Heart left ventricle (tissue), 16 donors: ENCODE measurements at regions of chrX and their contacts with region 1.

Region 1: GRCh38 chrX:72408885-72409284 is 103.2 kb upstream of the CITED1 start:
- DNase-seq: no peak
- ATAC-seq: no peak
- H3K4me3 ChIP-seq: no peak overlapping the region
- H3K27ac ChIP-seq: no peak overlapping the region
- H3K4me1 ChIP-seq: no peaks in the 10 kb centered on the region
- H3K27me3 ChIP-seq: peaks cover 0 to 12% (median 0%) of the 10 kb centered on the region in 9 donors
- CTCF ChIP-seq: no peak
- POLR2A ChIP-seq: no peak

Region 2: GRCh38 chrX:72245461-72246089 is 163.3 kb before region 1 on chrX:
- intact Hi-C with region 1: no loop called
- DNase-seq: peak in 4 of 5 donors; percentile 8 to 62 (median 36)
- ATAC-seq: peak in 3 of 4 donors; percentile 59 to 68 (median 65)
- H3K4me3 ChIP-seq: no peak overlapping the region
- H3K27ac ChIP-seq: no peak overlapping the region
- H3K4me1 ChIP-seq: peaks cover 0 to 6% (median 0%) of the 10 kb centered on the region in 12 donors
- H3K27me3 ChIP-seq: no peaks in the 10 kb centered on the region
- CTCF ChIP-seq: peak; percentile 41 to 74 (median 54)
- POLR2A ChIP-seq: no peak

Region 3: DNA sequence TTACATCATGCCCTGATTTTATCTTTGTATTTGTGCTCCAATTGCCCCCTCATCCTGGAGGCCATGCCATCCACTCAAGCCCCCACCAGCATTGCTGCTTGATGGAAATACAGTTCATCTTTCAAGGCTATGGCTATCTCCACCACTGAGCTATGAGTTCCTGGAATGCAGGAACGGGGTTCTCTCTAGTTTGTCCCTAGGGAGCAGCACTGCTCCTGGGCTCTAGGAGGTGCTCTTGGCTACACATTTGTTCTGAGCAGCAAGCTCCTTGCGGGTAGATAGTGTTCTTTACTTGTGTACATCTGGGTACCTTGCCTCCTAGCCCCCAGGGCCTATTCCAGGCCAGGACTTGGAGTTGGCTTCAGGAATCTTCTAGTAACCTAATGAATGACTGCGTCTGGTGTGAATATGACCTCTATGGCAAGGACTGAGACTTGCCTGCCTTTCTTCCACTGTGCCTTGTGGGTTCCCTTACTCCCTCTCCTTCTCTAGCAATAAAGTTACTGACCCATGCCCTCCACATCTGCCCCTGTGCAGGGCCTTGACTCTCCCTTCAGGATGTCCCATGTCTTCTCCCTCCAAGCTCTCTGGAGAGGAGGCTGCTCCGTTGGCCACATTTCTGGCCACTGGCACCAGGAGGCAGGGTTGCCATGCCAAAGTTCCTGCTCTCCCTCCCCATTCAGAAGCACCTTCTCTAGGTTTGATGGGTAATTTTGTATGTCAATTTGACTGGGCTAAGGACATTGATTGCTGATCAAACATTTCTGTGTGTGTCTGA is 110.7 kb before region 1 on chrX:
- intact Hi-C with region 1: no loop called
- DNase-seq: no peak
- ATAC-seq: peak in 1 of 4 donors; percentile 50
- H3K4me3 ChIP-seq: no peak overlapping the region
- H3K27ac ChIP-seq: no peak overlapping the region
- H3K4me1 ChIP-seq: no peaks in the 10 kb centered on the region
- H3K27me3 ChIP-seq: peaks cover 0 to 56% (median 0%) of the 10 kb centered on the region in 9 donors
- CTCF ChIP-seq: peak in 5 of 12 donors; percentile 11 to 20 (median 14)
- POLR2A ChIP-seq: no peak

Region 4: GRCh38 chrX:72349190-72349589 is 59.7 kb before region 1 on chrX:
- intact Hi-C with region 1: no loop called
- DNase-seq: no peak
- ATAC-seq: no peak
- H3K4me3 ChIP-seq: no peak overlapping the region
- H3K27ac ChIP-seq: no peak overlapping the region
- H3K4me1 ChIP-seq: no peaks in the 10 kb centered on the region
- H3K27me3 ChIP-seq: peaks cover 0 to 7% (median 0%) of the 10 kb centered on the region in 9 donors
- CTCF ChIP-seq: no peak
- POLR2A ChIP-seq: no peak

Region 5: DNA sequence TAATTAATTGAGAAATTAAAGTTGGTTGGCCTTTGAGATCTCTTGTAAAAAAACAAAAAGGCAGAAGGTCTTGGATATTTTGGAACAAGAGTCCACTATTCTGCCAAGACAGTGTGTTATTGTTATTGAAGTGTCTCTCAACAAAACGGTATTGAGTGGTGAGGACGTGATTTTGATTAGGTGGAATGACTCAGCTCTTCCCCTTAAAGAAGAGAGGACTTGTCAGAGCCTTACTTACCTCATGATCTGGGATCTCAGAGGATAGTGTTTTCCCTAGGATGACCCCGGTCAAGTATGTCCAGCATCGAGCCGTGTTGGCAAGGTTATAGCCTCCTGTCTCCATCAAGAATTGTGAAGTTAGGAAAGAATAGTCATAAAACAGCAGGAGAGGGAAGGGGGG is 52.9 kb after region 1 on chrX:
- intact Hi-C with region 1: loop called in 1 of 10 experiments (anchors 10 kb)
- DNase-seq: no peak
- ATAC-seq: peak in 1 of 4 donors; percentile 39
- H3K4me3 ChIP-seq: no peak overlapping the region
- H3K27ac ChIP-seq: no peak overlapping the region
- H3K4me1 ChIP-seq: peaks cover 0 to 8% (median 0%) of the 10 kb centered on the region in 12 donors
- H3K27me3 ChIP-seq: no peaks in the 10 kb centered on the region
- CTCF ChIP-seq: no peak
- POLR2A ChIP-seq: no peak

Region 6: GRCh38 chrX:72620550-72621145 is 211.8 kb after region 1 on chrX:
- intact Hi-C with region 1: no loop called
- DNase-seq: peak in 4 of 5 donors; percentile 17 to 37 (median 26)
- ATAC-seq: peak; percentile 73 to 92 (median 86)
- H3K4me3 ChIP-seq: no peak overlapping the region
- H3K27ac ChIP-seq: peak overlapping the region in 4 of 12 donors; percentile 42 to 55 (median 46)
- H3K4me1 ChIP-seq: peaks cover 0 to 7% (median 0%) of the 10 kb centered on the region in 12 donors
- H3K27me3 ChIP-seq: peaks cover 0 to 6% (median 0%) of the 10 kb centered on the region in 9 donors
- CTCF ChIP-seq: no peak
- POLR2A ChIP-seq: peak in 1 of 2 donors; percentile 14